A549 (cell line): ENCODE measurements at regions of chr17 and their contacts with region 1.

Region 1: GRCh38 chr17:33661975-33662374 is 368.9 kb upstream of the ASIC2 start:
- DNase-seq: no peak
- ATAC-seq: no peak
- H3K4me3 ChIP-seq: no peak overlapping the region
- H3K27ac ChIP-seq: no peak overlapping the region
- H3K4me1 ChIP-seq: no peaks in the 10 kb centered on the region
- CTCF ChIP-seq: no peak
- EP300 ChIP-seq: no peak
- POLR2A ChIP-seq: no peak
- RAD21 ChIP-seq: no peak

Region 2: GRCh38 chr17:33647956-33648355 is 14.0 kb before region 1 on chr17:
- CTCF ChIA-PET with region 1: interaction called, 11 read pairs
- POLR2A ChIA-PET with region 1: no interaction called
- DNase-seq: peak; percentile 20 to 44
- ATAC-seq: peak; percentile 84 to 85
- H3K4me3 ChIP-seq: no peak overlapping the region
- H3K27ac ChIP-seq: no peak overlapping the region
- H3K4me1 ChIP-seq: no peaks in the 10 kb centered on the region
- CTCF ChIP-seq: peak; percentile 50
- EP300 ChIP-seq: no peak
- POLR2A ChIP-seq: no peak
- RAD21 ChIP-seq: peak in 1 of 2 experiments; percentile 52; a peak in 3 of 5 replicates

Region 3: DNA sequence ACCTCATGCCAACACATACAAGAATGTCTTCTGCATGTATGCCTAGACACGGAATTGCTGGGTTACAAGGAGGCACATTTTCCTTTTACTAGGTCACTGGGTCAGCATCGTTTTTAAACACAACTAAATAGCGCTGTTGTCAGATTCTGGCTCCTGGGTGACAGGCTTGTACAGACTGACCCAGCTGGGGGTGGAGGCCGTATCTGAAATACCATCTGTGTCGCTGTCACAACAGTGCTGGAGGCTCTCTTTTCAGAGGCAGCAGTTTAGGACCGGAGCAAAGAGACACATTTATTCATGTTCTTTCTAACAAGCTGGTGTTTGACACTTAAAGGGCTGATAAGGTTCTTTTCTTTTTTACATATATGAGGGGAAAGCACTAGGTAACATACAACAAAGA is 34.1 kb after region 1 on chr17:
- CTCF ChIA-PET with region 1: no interaction called
- POLR2A ChIA-PET with region 1: no interaction called
- DNase-seq: no peak
- ATAC-seq: no peak
- H3K4me3 ChIP-seq: no peak overlapping the region
- H3K27ac ChIP-seq: no peak overlapping the region
- H3K4me1 ChIP-seq: no peaks in the 10 kb centered on the region
- CTCF ChIP-seq: no peak
- EP300 ChIP-seq: no peak
- POLR2A ChIP-seq: no peak
- RAD21 ChIP-seq: no peak